ENCODE measurements at regions of chr11 and their contacts with region 1.

Region 1: GRCh38 chr11:1515082-1516060 is 28.8 kb upstream of the MOB2 start:
- DNase-seq: peak; percentile 64 to 99 (median 88)
- ATAC-seq: peak; percentile 95 to 98 (median 97)
- H3K4me3 ChIP-seq: peak overlapping the region in 1 of 4 donors; percentile 23
- H3K27ac ChIP-seq: no peak overlapping the region
- H3K4me1 ChIP-seq: peaks cover 4 to 8% (median 4%) of the 10 kb centered on the region in 3 donors
- H3K27me3 ChIP-seq: no peaks in the 10 kb centered on the region
- CTCF ChIP-seq: peak; percentile 86 to 97 (median 94)

Region 2: GRCh38 chr11:1202776-1203504 is 312.4 kb before region 1 on chr11:
- intact Hi-C with region 1: loop called in 2 of 3 experiments (anchors 2 to 5 kb)
- DNase-seq: peak; percentile 22 to 91 (median 72)
- ATAC-seq: peak; percentile 85 to 97 (median 90)
- H3K4me3 ChIP-seq: no peak overlapping the region
- H3K27ac ChIP-seq: no peak overlapping the region
- H3K4me1 ChIP-seq: no peaks in the 10 kb centered on the region
- H3K27me3 ChIP-seq: peaks cover 0 to 5% (median 0%) of the 10 kb centered on the region in 4 donors
- CTCF ChIP-seq: peak; percentile 91 to 94 (median 93)

Region 3: DNA sequence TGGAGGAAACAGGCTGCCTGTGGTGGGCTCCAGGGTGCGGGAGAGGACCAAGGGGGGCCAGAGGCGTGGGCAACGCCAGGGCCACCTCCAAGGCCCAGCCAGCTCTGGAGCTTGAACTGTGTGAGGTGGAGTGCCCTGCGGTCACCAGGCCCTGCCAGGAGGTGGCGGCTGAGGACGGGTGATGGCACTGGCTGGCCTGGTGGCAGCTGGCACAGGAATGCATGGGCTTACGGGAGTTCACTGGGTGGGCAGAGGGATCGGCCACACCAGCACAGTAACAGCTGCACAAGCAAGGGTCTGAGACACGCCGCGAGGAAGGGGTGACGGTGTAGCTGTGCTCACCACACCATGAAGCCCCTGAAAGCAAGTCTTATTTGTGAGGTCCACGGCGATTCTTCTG is 221.7 kb before region 1 on chr11:
- intact Hi-C with region 1: loop called in 1 of 3 experiments (anchors 5 kb)
- DNase-seq: peak in 3 of 6 donors; percentile 56 to 82 (median 75)
- ATAC-seq: peak in 3 of 4 donors; percentile 40 to 69 (median 46)
- H3K4me3 ChIP-seq: no peak overlapping the region
- H3K27ac ChIP-seq: no peak overlapping the region
- H3K4me1 ChIP-seq: peaks cover 15 to 18% (median 16%) of the 10 kb centered on the region in 3 donors
- H3K27me3 ChIP-seq: no peaks in the 10 kb centered on the region
- CTCF ChIP-seq: peak in 2 of 4 donors; percentile 20 to 23